Heart left ventricle (tissue), 16 donors: ENCODE measurements at regions of chr1 and their contacts with region 1.

Region 1: GRCh38 chr1:222465211-222466041 is 82.5 kb downstream of the HHIPL2 start:
- DNase-seq: peak; percentile 88 to 94 (median 91)
- ATAC-seq: peak; percentile 95 to 100 (median 100)
- H3K4me3 ChIP-seq: peak overlapping the region; percentile 9 to 60 (median 50)
- H3K27ac ChIP-seq: peak overlapping the region; percentile 47 to 92 (median 76)
- H3K4me1 ChIP-seq: peaks cover 0 to 17% (median 7%) of the 10 kb centered on the region in 12 donors
- H3K27me3 ChIP-seq: peaks cover 0 to 2% (median 0%) of the 10 kb centered on the region in 9 donors
- CTCF ChIP-seq: peak; percentile 99 to 100 (median 100)
- POLR2A ChIP-seq: no peak

Region 2: GRCh38 chr1:222627232-222627631 is 161.8 kb after region 1 on chr1:
- intact Hi-C with region 1: loop called in 1 of 10 experiments (anchors 5 kb)
- DNase-seq: peak in 1 of 5 donors; percentile 34
- ATAC-seq: peak in 3 of 4 donors; percentile 52 to 90 (median 75)
- H3K4me3 ChIP-seq: no peak overlapping the region
- H3K27ac ChIP-seq: peak overlapping the region in 1 of 12 donors; percentile 30
- H3K4me1 ChIP-seq: peaks cover 0 to 6% (median 0%) of the 10 kb centered on the region in 12 donors
- H3K27me3 ChIP-seq: no peaks in the 10 kb centered on the region
- CTCF ChIP-seq: no peak
- POLR2A ChIP-seq: no peak

Region 3: DNA sequence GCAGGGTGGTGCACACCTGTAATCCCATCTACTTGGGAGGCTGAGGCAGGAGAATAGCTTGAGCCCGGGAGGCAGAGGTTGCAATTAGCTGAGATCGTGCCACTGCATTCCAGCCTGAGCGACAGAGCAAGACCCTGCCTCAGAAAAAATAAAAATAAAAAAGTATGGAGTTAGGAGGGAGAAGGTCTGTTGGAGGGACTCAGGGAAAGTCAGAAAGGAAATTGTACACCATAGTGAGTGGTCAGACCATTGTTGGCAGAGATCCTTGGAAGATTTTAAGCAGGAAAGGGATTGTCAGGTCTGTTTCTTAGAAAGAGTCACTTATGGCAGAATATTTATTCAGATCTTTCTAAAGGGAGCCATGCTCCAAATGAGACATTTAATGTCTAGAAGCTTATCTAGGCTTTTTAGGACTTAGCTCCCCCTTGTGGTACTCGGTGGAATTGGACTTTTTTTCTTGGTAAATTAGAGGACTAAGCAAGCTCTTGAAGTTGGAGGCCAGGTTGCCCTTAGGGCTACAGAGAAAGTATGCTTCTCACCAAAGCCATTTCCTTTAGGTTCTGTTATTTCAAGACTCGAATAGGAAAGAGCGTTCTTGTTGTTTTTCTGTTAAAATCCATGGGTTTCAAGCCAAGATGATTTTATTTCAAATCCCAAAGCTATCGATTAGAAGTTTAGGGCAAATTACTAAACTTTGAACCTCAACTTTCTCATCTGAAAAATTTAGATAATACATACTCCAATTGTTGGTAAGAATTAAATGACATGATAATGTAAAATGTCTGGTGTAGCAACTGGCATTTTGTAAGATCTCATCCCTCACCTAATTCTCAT is 169.0 kb after region 1 on chr1:
- intact Hi-C with region 1: loop called in 9 of 10 experiments (anchors 1 to 5 kb)
- DNase-seq: peak in 2 of 5 donors; percentile 61 to 62
- ATAC-seq: peak; percentile 67 to 85 (median 74)
- H3K4me3 ChIP-seq: no peak overlapping the region
- H3K27ac ChIP-seq: no peak overlapping the region
- H3K4me1 ChIP-seq: no peaks in the 10 kb centered on the region
- H3K27me3 ChIP-seq: no peaks in the 10 kb centered on the region
- CTCF ChIP-seq: peak; percentile 80 to 92 (median 87)
- POLR2A ChIP-seq: no peak

Region 4: DNA sequence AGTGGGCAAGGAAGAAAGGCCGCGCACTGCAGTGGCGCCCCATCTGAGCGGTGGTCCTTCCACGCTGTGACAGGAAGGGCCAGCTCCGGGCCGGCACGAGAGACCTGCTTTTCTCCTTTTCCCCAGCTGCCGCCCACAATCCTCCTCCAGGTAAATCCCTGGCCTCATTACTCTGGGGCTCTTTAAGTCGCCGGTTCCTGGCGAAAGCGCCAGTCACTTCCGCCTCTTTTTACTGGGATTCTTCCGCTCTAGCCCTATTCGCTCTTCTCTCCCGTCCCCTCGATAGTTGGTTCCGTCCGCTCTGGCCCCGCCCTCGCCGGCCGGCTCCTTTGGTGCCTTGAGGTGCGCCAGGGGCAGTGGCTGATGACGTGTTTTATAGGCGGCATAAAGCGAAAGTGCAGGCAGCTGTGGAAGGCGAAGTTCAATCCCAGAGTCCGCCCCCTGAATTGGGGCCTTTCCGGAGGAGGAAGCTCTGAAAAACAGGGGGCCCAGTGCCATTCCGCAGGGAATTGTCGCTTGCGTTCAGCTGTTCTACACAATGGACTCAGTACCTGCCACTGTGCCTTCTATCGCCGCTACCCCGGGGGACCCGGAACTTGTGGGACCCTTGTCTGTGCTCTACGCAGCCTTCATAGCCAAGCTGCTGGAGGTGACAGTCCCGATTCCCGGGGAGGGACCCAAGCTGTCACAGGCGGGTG is 178.7 kb after region 1 on chr1:
- intact Hi-C with region 1: loop called in 1 of 10 experiments (anchors 2 kb)
- DNase-seq: peak; percentile 97 to 99 (median 98)
- ATAC-seq: peak; percentile 100
- H3K4me3 ChIP-seq: peak overlapping the region; percentile 58 to 94 (median 80)
- H3K27ac ChIP-seq: peak overlapping the region; percentile 86 to 99 (median 96)
- H3K4me1 ChIP-seq: peaks cover 0 to 21% (median 12%) of the 10 kb centered on the region in 12 donors
- H3K27me3 ChIP-seq: no peaks in the 10 kb centered on the region
- CTCF ChIP-seq: peak in 1 of 12 donors; percentile 11
- POLR2A ChIP-seq: peak in 1 of 2 donors; percentile 71

Region 5: DNA sequence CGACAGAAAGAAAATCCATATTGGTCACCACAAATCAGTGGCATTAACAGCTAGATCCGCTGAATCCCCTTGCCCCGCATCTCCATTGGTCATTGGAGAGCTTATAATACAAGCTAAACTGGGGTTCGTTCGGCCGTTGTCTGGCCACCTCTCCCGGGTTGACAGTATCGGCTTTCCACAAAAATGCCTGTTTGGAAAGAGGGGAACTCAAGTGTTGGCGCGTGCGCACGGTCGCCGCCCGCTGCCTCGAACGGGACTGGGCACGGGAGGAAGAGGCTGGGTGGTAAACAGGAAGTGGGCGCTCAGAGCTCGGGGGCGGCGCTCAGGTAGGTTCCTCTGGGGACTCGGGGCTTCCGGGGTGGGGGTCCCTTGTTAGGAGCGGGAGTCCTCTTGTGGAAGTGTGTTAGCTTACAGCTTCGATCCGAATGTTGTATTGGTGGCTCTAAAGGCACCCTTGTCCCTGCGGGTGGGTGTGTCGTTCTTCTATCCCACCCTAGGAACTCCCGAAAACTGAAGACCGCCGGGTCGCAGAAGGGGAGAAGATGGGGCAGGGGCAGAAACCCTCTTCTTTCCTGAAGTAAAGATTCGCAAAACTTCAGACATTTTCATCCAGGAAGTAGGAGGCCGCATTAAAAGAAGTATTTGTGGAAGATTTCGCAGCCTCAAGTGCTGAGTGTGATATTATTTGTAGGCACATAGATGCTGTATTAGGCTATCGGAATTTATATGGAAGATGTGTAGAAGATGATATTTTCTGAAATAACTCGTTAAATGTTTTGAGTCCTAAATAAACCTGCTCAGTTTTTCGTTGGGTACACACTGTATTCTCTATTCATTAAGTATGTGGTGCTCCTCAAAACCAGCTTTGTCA is 247.9 kb after region 1 on chr1:
- intact Hi-C with region 1: loop called in 3 of 10 experiments (anchors 2 to 10 kb)
- DNase-seq: peak; percentile 93 to 95 (median 95)
- ATAC-seq: peak; percentile 88 to 93 (median 90)
- H3K4me3 ChIP-seq: peak overlapping the region; percentile 50 to 96 (median 77)
- H3K27ac ChIP-seq: peak overlapping the region; percentile 93 to 100 (median 98)
- H3K4me1 ChIP-seq: peaks cover 0 to 38% (median 30%) of the 10 kb centered on the region in 12 donors
- H3K27me3 ChIP-seq: no peaks in the 10 kb centered on the region
- CTCF ChIP-seq: no peak
- POLR2A ChIP-seq: peak in 1 of 2 donors; percentile 37

Region 6: DNA sequence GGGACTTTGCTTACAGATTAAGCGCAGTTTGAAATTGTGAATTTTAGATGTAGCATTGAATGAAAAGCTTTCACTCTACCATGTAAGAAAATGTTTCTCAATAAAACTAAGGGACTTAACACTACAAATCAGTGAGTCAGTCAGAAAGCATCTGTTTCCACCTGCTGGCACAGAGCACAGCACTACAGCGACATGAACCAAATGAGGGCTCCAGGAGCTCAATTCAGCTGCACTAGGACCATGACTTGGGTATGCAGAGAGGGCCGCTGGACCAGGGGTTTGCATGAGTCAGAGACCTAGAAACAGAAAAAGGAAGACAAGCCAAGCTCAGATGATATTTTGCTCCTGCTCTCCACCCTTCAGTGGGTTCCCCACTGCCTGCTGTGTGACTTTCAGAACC is 893.4 kb after region 1 on chr1:
- intact Hi-C with region 1: no loop called
- DNase-seq: no peak
- ATAC-seq: no peak
- H3K4me3 ChIP-seq: no peak overlapping the region
- H3K27ac ChIP-seq: no peak overlapping the region
- H3K4me1 ChIP-seq: peaks cover 0 to 10% (median 8%) of the 10 kb centered on the region in 12 donors
- H3K27me3 ChIP-seq: peaks cover 0 to 32% (median 0%) of the 10 kb centered on the region in 9 donors
- CTCF ChIP-seq: no peak
- POLR2A ChIP-seq: no peak